ENCODE measurements at regions of chr2 and their contacts with region 1.

Region 1: DNA sequence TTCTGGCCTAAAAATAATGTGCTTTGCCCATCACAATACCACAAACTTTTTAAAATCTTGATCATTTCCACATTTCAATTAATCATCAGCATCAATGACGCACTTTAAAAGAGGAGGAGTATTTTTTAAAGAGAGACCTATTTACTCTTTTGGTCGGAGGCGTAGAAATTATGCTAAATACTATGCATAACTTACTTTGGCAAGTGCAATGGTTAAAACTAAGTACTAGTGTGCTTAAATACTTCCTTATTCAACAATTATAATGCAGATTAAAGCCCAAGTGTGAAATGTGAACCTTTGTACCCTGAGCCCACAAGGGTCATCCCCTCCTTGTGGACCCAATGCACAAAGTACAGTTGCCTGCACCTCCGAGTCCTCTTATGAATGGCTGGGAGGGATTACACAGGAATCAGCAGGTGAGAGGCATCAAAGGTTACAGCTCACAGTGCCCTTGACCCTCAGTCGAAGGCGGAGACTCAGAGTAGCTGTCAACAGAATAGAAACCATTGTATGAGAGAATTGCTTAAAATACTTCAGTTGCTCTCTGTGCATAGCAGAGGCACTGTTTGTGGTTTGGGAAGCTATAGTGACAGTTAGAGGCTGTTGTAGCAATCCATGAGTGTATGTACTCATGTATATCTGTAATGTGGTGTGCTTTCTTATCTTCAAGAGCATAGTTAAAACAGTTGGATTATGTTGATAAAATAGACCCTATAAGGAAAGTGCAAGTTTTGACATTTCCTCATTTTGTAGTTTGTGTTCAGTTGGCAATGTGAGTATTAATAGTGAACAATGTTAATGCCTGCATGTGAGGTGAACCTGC is 151.7 kb upstream of the ITGA4 start:
- DNase-seq: peak in 4 of 5 donors; percentile 38 to 71 (median 44)
- H3K4me3 ChIP-seq: peak overlapping the region in 1 of 2 donors; percentile 16
- H3K4me3 Mint-ChIP-seq: peak overlapping the region; percentile 64 to 81 (median 72)
- H3K27ac ChIP-seq: peak overlapping the region; percentile 73
- H3K27ac Mint-ChIP-seq: peak overlapping the region; percentile 88 to 97 (median 92)
- H3K4me1 ChIP-seq: peaks cover 91% of the 10 kb centered on the region
- H3K4me1 Mint-ChIP-seq: peaks cover 53 to 80% (median 65%) of the 10 kb centered on the region in 4 donors
- H3K27me3 ChIP-seq: no peaks in the 10 kb centered on the region
- H3K27me3 Mint-ChIP-seq: no peaks in the 10 kb centered on the region

Region 2: GRCh38 chr2:180761224-180761623 is 544.3 kb before region 1 on chr2:
- CTCF ChIA-PET with region 1: no interaction called
- POLR2A ChIA-PET with region 1: no interaction called
- intact Hi-C with region 1: no loop called
- DNase-seq: no peak
- H3K4me3 ChIP-seq: no peak overlapping the region
- H3K4me3 Mint-ChIP-seq: no peak overlapping the region
- H3K27ac ChIP-seq: no peak overlapping the region
- H3K27ac Mint-ChIP-seq: no peak overlapping the region
- H3K4me1 ChIP-seq: no peaks in the 10 kb centered on the region
- H3K4me1 Mint-ChIP-seq: no peaks in the 10 kb centered on the region
- H3K27me3 ChIP-seq: no peaks in the 10 kb centered on the region
- H3K27me3 Mint-ChIP-seq: peaks cover 0 to 1% of the 10 kb centered on the region in 2 donors

Region 3: DNA sequence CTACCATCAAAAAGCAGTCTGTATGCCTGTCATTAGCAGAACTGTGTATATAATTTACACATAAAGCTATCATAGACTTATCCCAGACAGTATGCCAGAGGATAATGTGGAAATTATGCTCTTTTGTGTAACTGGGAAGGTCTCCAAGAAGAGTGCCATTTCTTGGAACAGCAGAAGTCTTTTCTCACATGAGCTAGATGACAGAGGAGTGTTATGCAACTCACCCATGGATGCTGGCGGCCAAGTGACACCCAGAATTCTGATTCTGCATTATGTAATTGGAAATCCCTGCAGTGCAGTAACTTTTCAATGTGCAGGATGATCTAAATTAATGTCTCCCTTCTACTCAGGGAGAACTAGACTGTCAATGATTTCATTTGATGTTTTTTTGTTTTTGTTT is 165.1 kb before region 1 on chr2:
- CTCF ChIA-PET with region 1: interaction called, 3 read pairs
- POLR2A ChIA-PET with region 1: interaction called, 20 read pairs
- intact Hi-C with region 1: no loop called
- DNase-seq: peak in 1 of 5 donors; percentile 66
- H3K4me3 ChIP-seq: no peak overlapping the region
- H3K4me3 Mint-ChIP-seq: peak overlapping the region in 7 of 8 donors; percentile 61 to 91 (median 82)
- H3K27ac ChIP-seq: peak overlapping the region; percentile 74
- H3K27ac Mint-ChIP-seq: peak overlapping the region; percentile 86 to 99 (median 98)
- H3K4me1 ChIP-seq: peaks cover 72% of the 10 kb centered on the region
- H3K4me1 Mint-ChIP-seq: peaks cover 44 to 78% (median 58%) of the 10 kb centered on the region in 4 donors
- H3K27me3 ChIP-seq: no peaks in the 10 kb centered on the region
- H3K27me3 Mint-ChIP-seq: no peaks in the 10 kb centered on the region

Region 4: DNA sequence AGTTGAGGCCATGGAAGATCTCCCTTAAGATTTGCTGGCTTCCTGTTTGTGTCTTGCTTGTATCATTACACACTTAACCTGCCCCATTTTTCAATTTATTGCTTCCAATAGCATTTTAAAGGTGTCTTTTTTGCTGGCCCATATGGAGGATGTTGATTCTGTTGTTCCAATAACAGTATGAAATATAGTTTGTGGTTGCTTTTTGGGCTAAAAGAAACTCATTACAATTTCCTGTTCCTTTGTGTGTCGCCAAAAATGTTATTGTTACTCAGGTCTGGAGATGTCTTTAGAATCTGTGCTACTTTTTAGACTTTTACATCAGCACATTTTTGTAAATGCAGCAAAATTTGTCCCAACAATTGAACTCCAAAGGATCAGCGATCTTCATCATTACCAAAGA is 82.3 kb before region 1 on chr2:
- CTCF ChIA-PET with region 1: no interaction called
- POLR2A ChIA-PET with region 1: interaction called, 13 read pairs
- intact Hi-C with region 1: loop called (anchors 2 kb)
- DNase-seq: peak in 4 of 5 donors; percentile 35 to 63 (median 48)
- H3K4me3 ChIP-seq: no peak overlapping the region
- H3K4me3 Mint-ChIP-seq: peak overlapping the region in 7 of 8 donors; percentile 53 to 86 (median 65)
- H3K27ac ChIP-seq: peak overlapping the region; percentile 61
- H3K27ac Mint-ChIP-seq: peak overlapping the region; percentile 88 to 99 (median 94)
- H3K4me1 ChIP-seq: peaks cover 37% of the 10 kb centered on the region
- H3K4me1 Mint-ChIP-seq: peaks cover 22 to 40% (median 29%) of the 10 kb centered on the region in 4 donors
- H3K27me3 ChIP-seq: no peaks in the 10 kb centered on the region
- H3K27me3 Mint-ChIP-seq: no peaks in the 10 kb centered on the region

Region 5: GRCh38 chr2:181281206-181281832 is 24.2 kb before region 1 on chr2:
- CTCF ChIA-PET with region 1: interaction called, 6 read pairs
- POLR2A ChIA-PET with region 1: interaction called, 15 read pairs
- intact Hi-C with region 1: loop called (anchors 2 kb)
- DNase-seq: peak in 4 of 5 donors; percentile 56 to 72 (median 64)
- H3K4me3 ChIP-seq: no peak overlapping the region
- H3K4me3 Mint-ChIP-seq: peak overlapping the region in 6 of 8 donors; percentile 1 to 52 (median 23)
- H3K27ac ChIP-seq: peak overlapping the region; percentile 23
- H3K27ac Mint-ChIP-seq: peak overlapping the region; percentile 27 to 91 (median 81)
- H3K4me1 ChIP-seq: peaks cover 34% of the 10 kb centered on the region
- H3K4me1 Mint-ChIP-seq: peaks cover 20 to 41% (median 31%) of the 10 kb centered on the region in 4 donors
- H3K27me3 ChIP-seq: no peaks in the 10 kb centered on the region
- H3K27me3 Mint-ChIP-seq: no peaks in the 10 kb centered on the region

Region 6: GRCh38 chr2:181393472-181393871 is 88.0 kb after region 1 on chr2:
- CTCF ChIA-PET with region 1: interaction called, 3 read pairs
- POLR2A ChIA-PET with region 1: interaction called, 5 read pairs
- intact Hi-C with region 1: loop called (anchors 5 kb)
- DNase-seq: peak in 4 of 5 donors; percentile 12 to 35 (median 28)
- H3K4me3 ChIP-seq: no peak overlapping the region
- H3K4me3 Mint-ChIP-seq: peak overlapping the region; percentile 18 to 85 (median 66)
- H3K27ac ChIP-seq: no peak overlapping the region
- H3K27ac Mint-ChIP-seq: peak overlapping the region in 6 of 7 donors; percentile 66 to 93 (median 78)
- H3K4me1 ChIP-seq: peaks cover 22% of the 10 kb centered on the region
- H3K4me1 Mint-ChIP-seq: peaks cover 22 to 32% (median 27%) of the 10 kb centered on the region in 4 donors
- H3K27me3 ChIP-seq: no peaks in the 10 kb centered on the region
- H3K27me3 Mint-ChIP-seq: no peaks in the 10 kb centered on the region

Region 7: GRCh38 chr2:181850936-181851560 is 545.5 kb after region 1 on chr2:
- CTCF ChIA-PET with region 1: no interaction called
- POLR2A ChIA-PET with region 1: no interaction called
- intact Hi-C with region 1: no loop called
- DNase-seq: no peak
- H3K4me3 ChIP-seq: no peak overlapping the region
- H3K4me3 Mint-ChIP-seq: no peak overlapping the region
- H3K27ac ChIP-seq: no peak overlapping the region
- H3K27ac Mint-ChIP-seq: no peak overlapping the region
- H3K4me1 ChIP-seq: no peaks in the 10 kb centered on the region
- H3K4me1 Mint-ChIP-seq: peaks cover 0 to 2% (median 0%) of the 10 kb centered on the region in 4 donors
- H3K27me3 ChIP-seq: no peaks in the 10 kb centered on the region
- H3K27me3 Mint-ChIP-seq: peaks cover 2 to 4% of the 10 kb centered on the region in 2 donors